ENCODE measurements at regions of chr17 and their contacts with region 1.

Region 1: GRCh38 chr17:43846221-43846712 is 709 bp upstream of the CD300LG start:
- DNase-seq: peak; percentile 85 to 87
- H3K4me3 ChIP-seq: no peak overlapping the region
- H3K27ac ChIP-seq: peak overlapping the region; percentile 34 to 56
- H3K4me1 ChIP-seq: no peaks in the 10 kb centered on the region
- H3K27me3 ChIP-seq: no peaks in the 10 kb centered on the region
- CTCF ChIP-seq: peak; percentile 90 to 99 (median 96)
- POLR2A ChIP-seq: no peak

Region 2: DNA sequence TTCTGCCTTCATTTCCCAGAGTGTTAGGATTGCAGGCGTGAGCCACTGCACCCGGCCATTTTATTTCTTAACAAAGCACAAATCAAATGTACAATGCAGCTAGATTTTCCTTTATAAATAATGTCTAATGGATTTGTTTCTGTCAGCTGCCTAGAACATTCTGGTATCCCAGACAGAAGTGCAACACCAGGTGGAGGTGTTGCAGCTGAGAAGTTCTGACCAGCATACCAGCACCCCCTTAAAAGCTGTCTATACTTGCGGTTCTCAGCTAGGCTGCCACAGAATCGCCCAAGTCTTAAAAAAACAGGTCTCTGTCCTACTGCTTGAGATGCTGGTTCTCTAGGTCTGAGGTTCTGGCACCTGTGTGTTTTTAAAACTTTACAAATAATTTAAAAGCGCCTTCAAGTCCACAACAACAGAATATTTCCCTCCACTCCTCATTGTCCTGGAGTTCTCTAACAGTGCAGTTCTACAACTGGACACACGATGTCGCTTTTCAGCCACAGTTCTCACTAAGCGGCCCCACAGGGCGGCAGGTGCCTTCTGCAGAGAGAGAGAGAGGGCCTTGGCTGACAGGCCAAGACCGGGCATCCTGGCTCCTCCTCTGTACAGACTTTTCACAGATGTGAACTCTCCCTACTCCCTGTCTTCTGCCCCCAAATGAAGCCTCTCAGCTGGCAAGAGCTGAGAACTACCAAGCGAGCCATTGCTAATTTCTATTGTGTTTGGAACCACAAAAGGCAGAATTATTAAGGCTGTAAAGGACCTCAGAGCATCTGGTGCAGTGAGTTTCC is 152.0 kb before region 1 on chr17:
- intact Hi-C with region 1: loop called (anchors 10 kb)
- DNase-seq: peak; percentile 66 to 80
- H3K4me3 ChIP-seq: no peak overlapping the region
- H3K27ac ChIP-seq: no peak overlapping the region
- H3K4me1 ChIP-seq: no peaks in the 10 kb centered on the region
- H3K27me3 ChIP-seq: no peaks in the 10 kb centered on the region
- CTCF ChIP-seq: peak; percentile 87 to 97 (median 92)
- POLR2A ChIP-seq: no peak

Measured in uterus (tissue), 4 donors.